ENCODE measurements at regions of chr22 and their contacts with region 1.

Region 1: DNA sequence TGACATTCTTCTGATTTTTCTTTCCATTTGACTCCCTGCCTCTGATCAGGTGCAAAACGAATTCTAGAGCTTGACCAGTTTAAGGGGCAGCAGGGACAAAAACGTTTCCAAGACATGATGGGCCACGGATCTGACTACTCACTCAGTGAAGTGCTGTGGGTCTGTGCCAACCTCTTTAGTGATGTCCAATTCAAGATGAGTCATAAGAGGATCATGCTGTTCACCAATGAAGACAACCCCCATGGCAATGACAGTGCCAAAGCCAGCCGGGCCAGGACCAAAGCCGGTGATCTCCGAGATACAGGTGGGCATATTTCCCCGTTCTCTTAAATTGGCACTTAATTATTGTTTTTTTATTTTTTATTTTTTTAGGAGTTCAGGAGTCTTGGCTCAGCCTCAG is 15.4 kb downstream of the XRCC6 start:
- DNase-seq: no peak
- ATAC-seq: 0 out of 2 replicates have a peak, but pooled peaks have one; percentile 41
- H3K4me3 ChIP-seq: no peak overlapping the region
- H3K27ac ChIP-seq: no peak overlapping the region
- H3K4me1 ChIP-seq: no peaks in the 10 kb centered on the region
- H3K27me3 ChIP-seq: no peaks in the 10 kb centered on the region
- CTCF ChIP-seq: no peak
- POLR2A ChIP-seq: no peak
- RAD21 ChIP-seq: no peak

Region 2: DNA sequence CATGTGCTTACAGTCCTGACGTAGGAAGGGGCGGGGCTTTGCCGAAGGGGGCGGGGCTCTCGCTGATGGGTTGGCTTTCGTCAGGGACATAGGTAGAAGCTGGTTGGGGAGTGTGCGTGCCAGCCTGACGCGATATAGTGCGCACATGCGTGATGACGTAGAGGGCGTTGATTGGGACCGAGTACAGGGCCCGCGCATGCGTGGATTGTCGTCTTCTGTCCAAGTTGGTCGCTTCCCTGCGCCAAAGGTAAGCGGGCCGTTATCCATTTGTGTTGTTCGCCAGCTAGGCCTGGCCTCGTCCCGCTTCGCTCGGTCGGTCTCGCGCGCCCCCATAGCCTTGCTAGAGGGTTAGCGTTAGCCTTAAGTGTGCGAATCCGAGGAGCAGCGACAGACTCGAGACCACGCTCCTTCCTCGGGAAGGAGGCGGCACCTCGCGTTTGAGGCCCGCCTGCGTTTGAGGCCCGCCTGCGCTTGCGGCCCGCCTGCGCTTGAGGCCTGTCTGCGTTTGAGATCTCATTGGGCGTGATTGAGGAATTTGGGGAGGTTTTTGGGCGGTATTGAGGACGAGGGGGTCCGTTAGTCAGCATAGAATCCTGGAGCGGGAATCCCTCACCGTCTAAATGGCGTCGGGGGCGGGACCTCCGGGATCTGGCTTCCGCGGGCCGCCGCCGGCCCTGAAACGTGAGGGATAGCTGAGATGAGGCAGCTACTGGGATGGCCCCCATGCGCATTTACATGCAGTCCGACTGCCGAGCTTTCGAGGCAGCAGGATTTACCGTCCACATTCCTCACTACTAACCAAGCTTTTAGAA is 15.2 kb before region 1 on chr22 and contains the start of gene XRCC6:
- CTCF ChIA-PET with region 1: no interaction called
- POLR2A ChIA-PET with region 1: interaction called, 13 read pairs
- RAD21 ChIA-PET with region 1: no interaction called
- intact Hi-C with region 1: no loop called
- DNase-seq: peak; percentile 100
- ATAC-seq: peak; percentile 94
- H3K4me3 ChIP-seq: peak within 1 kb of the TSS; percentile 70 to 100
- H3K27ac ChIP-seq: peak within 1 kb of the TSS; percentile 95
- H3K4me1 ChIP-seq: peaks cover 11 to 16% of the 10 kb centered on the region in 2 experiments
- H3K27me3 ChIP-seq: no peaks in the 10 kb centered on the region
- CTCF ChIP-seq: no peak
- POLR2A ChIP-seq: peak; percentile 71
- RAD21 ChIP-seq: no peak
- total RNA-seq, gene XRCC6: 588 TPM

Region 3: GRCh38 chr22:41822317-41823060 is 186.0 kb after region 1 on chr22:
- CTCF ChIA-PET with region 1: no interaction called
- POLR2A ChIA-PET with region 1: no interaction called
- RAD21 ChIA-PET with region 1: no interaction called
- intact Hi-C with region 1: no loop called
- DNase-seq: peak; percentile 62
- ATAC-seq: peak; percentile 85
- H3K4me3 ChIP-seq: no peak overlapping the region
- H3K27ac ChIP-seq: no peak overlapping the region
- H3K4me1 ChIP-seq: peaks cover 5 to 10% of the 10 kb centered on the region in 2 experiments; a peak in 3 of 4 replicates
- H3K27me3 ChIP-seq: no peaks in the 10 kb centered on the region
- CTCF ChIP-seq: peak; percentile 46 to 68 (median 65); a peak in 5 of 6 replicates
- POLR2A ChIP-seq: no peak
- RAD21 ChIP-seq: peak; percentile 77

Region 4: DNA sequence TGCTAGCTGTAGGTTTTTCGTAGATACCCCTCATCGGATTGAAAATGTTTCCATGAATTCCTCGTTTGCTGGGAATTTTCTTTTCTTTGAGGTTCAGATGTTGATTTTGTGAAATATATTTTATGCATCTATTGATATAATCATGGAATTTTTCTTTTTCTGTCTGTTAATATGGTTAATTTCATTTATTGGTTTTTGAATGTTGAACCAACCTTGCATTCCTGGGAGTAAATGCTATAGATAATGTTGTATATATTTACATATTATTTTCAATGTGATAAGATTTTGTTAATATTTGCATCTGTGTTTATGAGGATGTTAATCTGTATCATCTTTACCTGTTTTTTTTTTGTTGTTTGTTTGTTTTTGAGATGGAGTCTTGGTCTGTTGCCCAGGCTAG is 464.7 kb after region 1 on chr22:
- CTCF ChIA-PET with region 1: no interaction called
- POLR2A ChIA-PET with region 1: no interaction called
- RAD21 ChIA-PET with region 1: no interaction called
- intact Hi-C with region 1: no loop called
- DNase-seq: no peak
- ATAC-seq: no peak
- H3K4me3 ChIP-seq: no peak overlapping the region
- H3K27ac ChIP-seq: no peak overlapping the region
- H3K4me1 ChIP-seq: no peaks in the 10 kb centered on the region
- H3K27me3 ChIP-seq: no peaks in the 10 kb centered on the region
- CTCF ChIP-seq: no peak
- POLR2A ChIP-seq: no peak
- RAD21 ChIP-seq: no peak

Measured in HCT116 (cell line).